ENCODE measurements at regions of chr1 and their contacts with region 1.

Region 1: DNA sequence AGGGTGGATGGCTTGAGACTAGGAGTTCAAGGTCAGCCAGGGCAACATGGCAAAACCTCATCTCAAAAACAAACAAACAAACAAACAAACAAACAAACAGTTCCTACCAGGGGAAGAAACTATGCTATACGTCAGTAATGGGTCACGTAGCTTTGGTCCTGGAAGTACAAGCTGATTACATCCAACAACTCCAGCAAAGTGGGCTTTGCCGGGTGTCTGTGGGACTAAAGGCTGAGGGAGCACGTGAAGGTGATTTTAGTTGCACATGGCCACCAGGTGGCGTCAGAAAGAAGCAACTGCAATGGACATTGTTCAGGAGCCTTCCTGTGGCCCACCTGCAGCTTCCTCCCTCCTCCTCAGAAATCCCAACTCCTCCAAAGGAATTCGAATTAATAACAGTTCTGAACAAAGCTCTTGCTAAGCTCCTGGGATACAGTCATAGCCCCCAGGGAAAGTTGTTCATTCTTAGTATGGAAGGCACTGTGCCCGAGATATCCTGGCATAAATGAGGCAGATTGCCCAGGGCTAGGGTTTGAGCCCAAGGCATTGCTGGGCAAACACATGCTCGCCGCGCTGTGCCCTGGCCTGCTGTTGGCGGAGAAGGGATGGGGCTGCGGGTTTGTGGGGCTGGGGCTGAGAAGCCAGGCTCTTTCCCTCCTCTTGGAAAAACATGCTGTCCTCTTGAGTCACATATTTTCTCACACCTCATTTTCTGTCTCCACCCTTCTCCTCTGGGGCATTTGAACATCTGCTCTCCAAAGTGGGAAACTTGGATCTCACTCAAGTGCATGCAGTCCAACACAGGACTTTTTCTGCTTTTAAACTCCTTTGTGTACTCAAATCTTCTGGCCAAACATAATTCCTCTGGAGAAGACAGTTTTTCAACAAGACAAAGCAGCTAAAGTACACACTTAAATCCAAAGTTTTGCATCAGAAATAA is 28.6 kb downstream of the AKNAD1 start:
- DNase-seq: peak; percentile 84
- CTCF ChIP-seq: peak; percentile 67

Region 2: GRCh38 chr1:108846001-108846400 is 17.7 kb after region 1 on chr1:
- CTCF ChIA-PET with region 1: interaction called, 50 read pairs
- POLR2A ChIA-PET with region 1: no interaction called
- DNase-seq: no peak
- CTCF ChIP-seq: no peak

Region 3: GRCh38 chr1:108862698-108863477 is 34.6 kb after region 1 on chr1:
- CTCF ChIA-PET with region 1: interaction called, 14 read pairs
- POLR2A ChIA-PET with region 1: no interaction called
- DNase-seq: no peak
- CTCF ChIP-seq: no peak

Region 4: DNA sequence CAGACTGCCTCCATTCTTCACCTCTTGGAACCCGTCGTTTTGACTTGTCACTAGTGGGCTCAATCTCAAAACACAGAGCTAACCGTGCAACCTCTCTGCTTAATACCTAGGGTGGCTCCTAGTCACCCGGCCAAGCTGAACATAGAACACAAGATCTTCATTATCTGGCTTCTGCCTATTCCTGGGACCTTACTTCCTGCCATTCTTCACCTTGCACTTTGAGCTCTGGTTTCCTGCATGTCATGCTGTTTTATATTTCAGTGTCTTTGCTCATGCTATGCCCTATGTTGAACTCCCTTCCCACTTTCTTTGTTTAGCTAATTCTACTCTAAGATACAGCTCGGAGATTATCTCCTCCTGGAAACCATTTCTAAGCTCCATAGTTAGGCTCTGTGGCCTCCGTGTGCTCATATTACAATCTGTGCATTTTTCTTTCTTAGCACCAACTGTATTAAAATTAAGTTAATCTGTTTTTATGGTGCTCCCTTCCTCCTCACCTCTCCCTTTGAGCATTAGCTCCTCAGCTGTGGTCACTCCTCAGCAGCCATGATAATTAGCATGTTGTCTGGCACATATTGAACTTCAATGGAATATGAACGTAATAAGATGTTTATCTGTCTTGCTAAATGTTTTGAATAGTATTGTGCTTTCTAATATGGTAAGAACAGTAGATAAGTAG is 61.6 kb after region 1 on chr1:
- CTCF ChIA-PET with region 1: interaction called, 300 read pairs
- POLR2A ChIA-PET with region 1: no interaction called
- DNase-seq: no peak
- CTCF ChIP-seq: no peak

Region 5: GRCh38 chr1:109112652-109113285 is 284.5 kb after region 1 on chr1:
- CTCF ChIA-PET with region 1: interaction called, 71 read pairs
- POLR2A ChIA-PET with region 1: no interaction called
- DNase-seq: peak; percentile 81
- CTCF ChIP-seq: peak; percentile 94

Measured in GM10248 (cell line).